Mucosa of descending colon (tissue), 3 donors: ENCODE measurements at regions of chr11 and their contacts with region 1.

Region 1: GRCh38 chr11:102495161-102496042 is 35.1 kb downstream of the MMP7 start:
- DNase-seq: peak in 1 of 3 donors; percentile 52
- ATAC-seq: peak; percentile 90
- H3K4me3 ChIP-seq: no peak overlapping the region
- H3K4me1 ChIP-seq: peaks cover 13% of the 10 kb centered on the region
- CTCF ChIP-seq: peak; percentile 51

Region 2: DNA sequence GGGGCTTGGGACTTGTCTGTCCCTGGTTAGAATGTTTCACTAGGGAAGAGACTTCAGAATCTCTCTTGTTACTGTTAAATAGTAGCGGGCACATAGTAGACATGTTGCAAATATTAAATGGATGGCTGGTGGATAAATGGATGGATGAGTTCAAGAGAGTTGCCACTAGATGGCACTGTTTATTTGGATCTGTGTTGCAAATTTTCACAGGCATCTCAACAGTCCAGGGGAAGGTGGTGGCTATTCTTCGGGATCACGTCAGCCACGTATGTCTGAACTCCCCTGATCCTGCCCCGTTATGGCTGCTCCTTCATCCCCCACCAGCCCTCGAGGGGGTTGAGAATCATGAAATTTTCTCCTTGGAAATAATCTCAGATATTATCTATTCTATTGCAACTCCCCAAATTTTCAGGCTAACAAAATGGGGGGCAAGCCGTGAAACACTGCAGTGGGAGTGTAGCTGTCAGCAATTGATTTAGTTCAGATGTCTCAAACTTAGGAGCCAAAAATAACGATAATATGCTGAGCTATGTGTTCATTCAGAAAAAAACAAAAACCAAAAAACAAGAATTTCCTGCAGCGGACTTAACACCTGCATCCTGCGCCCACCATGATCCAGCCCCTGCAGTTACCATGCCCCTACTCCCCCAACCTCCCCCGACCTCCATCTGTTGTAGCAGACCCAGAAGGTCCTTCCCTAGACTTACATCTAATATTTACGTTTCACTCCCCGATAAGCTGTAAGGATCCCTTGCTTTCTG is 207.3 kb before region 1 on chr11:
- intact Hi-C with region 1: loop called in 1 of 2 experiments (anchors 10 kb)
- DNase-seq: peak in 1 of 3 donors; percentile 68
- ATAC-seq: peak; percentile 87
- H3K4me3 ChIP-seq: no peak overlapping the region
- H3K4me1 ChIP-seq: no peaks in the 10 kb centered on the region
- CTCF ChIP-seq: peak; percentile 39

Region 3: DNA sequence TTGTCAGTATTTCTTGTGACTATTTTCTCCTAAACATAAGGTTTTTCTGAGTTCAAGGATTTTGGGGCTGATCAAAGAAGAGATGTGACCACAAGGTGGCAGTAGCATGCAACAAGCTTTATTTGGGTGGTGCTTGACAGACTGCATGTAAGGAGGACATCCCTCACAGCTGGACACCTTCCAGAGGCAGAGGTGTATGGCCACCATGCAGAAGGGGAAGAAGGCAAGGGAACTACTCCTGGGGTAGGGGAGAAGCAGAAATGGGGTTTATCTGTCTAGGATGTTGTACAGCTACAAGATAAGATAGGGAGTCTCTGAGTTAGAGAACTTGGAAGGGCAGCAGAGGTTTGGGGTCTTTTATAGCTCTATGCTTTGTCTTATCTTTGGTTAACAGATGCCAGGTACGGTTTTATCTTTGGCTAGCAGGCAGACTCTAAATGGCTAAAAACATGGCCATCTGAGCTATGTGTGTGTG is 153.5 kb before region 1 on chr11:
- intact Hi-C with region 1: loop called (anchors 5 to 10 kb)
- DNase-seq: peak in 1 of 3 donors; percentile 94
- ATAC-seq: peak; percentile 83
- H3K4me3 ChIP-seq: no peak overlapping the region
- H3K4me1 ChIP-seq: peaks cover 3% of the 10 kb centered on the region
- CTCF ChIP-seq: peak; percentile 63

Region 4: DNA sequence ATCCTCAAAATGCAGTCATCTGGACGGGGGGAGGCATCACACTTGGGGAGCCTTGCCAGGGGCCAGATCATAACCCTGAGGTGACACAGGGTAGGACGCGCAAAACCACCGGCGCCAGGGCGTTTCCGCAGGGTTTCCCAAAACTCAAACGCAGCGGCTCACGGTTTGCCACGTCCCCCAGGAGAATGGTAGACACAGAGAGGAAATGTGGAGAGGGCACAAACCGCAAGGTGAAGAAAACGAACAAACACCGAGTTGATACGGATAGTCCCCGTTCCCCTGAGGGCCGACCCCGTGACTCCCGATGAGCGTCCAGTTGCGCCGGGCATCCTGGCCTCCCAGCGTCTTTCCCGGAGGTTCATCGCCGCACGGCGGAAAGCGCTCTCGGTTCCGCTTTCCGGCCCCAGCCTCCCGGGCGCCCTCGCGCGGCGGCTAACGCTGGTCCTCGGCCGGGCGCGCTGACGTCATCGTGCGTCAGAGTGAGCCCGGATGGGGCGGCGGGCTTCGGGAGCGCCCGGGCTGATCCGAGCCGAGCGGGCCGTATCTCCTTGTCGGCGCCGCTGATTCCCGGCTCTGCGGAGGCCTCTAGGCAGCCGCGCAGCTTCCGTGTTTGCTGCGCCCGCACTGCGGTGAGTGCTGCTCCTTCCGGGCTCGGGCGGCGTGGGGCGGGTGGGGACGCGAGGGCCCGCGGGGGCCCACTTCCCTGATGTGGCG is 148.5 kb before region 1 on chr11 and contains the start of gene BIRC2:
- intact Hi-C with region 1: loop called (anchors 5 to 10 kb)
- DNase-seq: peak; percentile 96 to 98 (median 97)
- ATAC-seq: peak; percentile 98
- H3K4me3 ChIP-seq: peak within 1 kb of the TSS; percentile 75
- H3K4me1 ChIP-seq: peaks cover 12% of the 10 kb centered on the region
- CTCF ChIP-seq: peak; percentile 84
- total RNA-seq, gene BIRC2: 42.8 to 55.0 (median 45.2) TPM

Region 5: DNA sequence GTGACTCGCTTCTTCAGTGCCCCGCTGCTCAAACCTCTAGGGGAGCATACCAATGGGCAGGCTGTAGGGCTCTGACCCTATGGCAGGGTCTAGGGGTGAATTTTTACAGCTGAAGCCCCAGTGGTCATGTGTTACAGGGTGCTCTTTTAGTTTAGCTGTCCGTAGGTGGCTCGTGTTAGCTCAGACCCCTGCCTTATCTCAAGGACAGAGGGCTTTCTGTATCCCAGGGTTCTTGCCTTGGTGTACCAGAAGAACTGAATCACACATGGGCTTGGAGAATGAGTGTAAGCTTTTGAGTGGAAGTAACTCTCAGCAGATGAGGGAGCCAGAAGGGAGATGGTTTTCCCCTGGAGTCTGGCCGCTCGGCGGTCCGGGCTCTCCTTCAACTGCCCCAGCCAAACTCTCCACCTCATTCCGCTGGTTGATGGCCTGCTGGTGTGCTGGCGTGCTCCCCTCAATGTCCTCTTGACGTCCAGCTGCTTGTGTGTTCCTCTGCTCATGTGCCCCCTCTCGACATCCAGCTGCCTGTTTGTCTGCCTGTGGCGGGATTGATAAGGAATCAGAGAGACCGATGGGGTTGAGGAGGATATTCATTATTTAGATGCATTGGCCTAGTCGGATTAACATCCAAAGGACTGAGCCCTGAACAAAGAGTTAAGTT is 110.9 kb before region 1 on chr11:
- intact Hi-C with region 1: loop called in 1 of 2 experiments (anchors 10 kb)
- DNase-seq: no peak
- ATAC-seq: no peak
- H3K4me3 ChIP-seq: no peak overlapping the region
- H3K4me1 ChIP-seq: no peaks in the 10 kb centered on the region
- CTCF ChIP-seq: no peak

Region 6: GRCh38 chr11:103070142-103070541 is 574.7 kb after region 1 on chr11:
- intact Hi-C with region 1: no loop called
- DNase-seq: no peak
- ATAC-seq: peak; percentile 34
- H3K4me3 ChIP-seq: no peak overlapping the region
- H3K4me1 ChIP-seq: no peaks in the 10 kb centered on the region
- CTCF ChIP-seq: no peak